Head of caudate nucleus (tissue), 42 donors: ENCODE measurements at regions of chr17 and their contacts with region 1.

Region 1: DNA sequence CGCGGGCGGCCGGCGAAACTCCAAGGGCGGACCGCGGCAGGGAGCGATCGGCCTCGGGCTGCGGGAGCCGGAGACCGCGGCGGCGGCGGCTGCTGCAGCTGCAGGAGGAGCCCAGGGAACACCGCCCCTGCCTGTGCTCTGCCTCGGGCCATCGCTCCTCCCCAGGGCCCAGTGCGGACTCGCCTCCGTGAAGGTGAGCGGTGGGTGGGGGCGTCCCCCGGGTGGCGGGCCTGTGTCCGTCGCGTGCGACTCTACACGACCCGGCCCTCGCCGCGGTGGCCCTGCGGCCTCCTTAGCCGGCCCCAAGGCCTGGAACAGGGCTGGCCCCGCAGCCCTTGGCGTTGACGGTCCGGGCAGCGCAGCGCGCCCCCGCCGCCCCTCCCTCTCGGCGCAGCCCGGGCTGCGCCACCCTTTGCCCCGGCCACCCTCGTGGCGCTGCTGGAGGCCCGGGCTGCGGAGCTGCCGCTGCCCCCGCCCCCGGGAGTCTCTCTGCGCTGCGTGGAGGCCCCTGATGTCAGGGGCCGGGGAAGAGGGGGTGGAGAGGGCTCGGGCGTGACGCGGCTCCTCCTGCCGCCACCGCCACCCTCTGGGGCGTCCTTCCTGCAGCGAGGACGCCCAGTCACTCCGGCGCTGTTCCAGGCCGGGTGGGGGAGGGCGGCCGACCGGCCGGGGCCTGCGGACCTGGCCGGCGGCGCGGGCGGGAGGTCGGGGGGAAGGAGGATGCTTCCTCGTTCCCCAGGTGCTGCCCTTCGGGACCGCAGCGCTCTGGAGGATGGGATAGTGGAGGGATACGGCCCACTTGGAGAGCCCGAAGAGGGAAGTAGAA is 485 bp downstream of the DYNLL2 start:
- DNase-seq: peak in 39 of 42 donors; percentile 37 to 85 (median 59)

Region 2: GRCh38 chr17:58006924-58007780 is 76.6 kb before region 1 on chr17 and contains the start of gene SRSF1:
- intact Hi-C with region 1: loop called (anchors 2 kb)
- DNase-seq: peak; percentile 92 to 99 (median 96)